CD4-positive, alpha-beta memory T cell (primary cell): ENCODE measurements at regions of chr3 and their contacts with region 1.

Region 1: GRCh38 chr3:149009732-149010131 is 18.4 kb downstream of the GYG1 start:
- DNase-seq: peak; percentile 57 to 82 (median 66)
- H3K4me3 ChIP-seq: no peak overlapping the region
- H3K4me3 Mint-ChIP-seq: peak overlapping the region in 7 of 8 donors; percentile 4 to 61 (median 40)
- H3K27ac ChIP-seq: no peak overlapping the region
- H3K27ac Mint-ChIP-seq: peak overlapping the region in 6 of 7 donors; percentile 9 to 87 (median 72)
- H3K4me1 ChIP-seq: peaks cover 22% of the 10 kb centered on the region
- H3K4me1 Mint-ChIP-seq: peaks cover 9 to 45% (median 27%) of the 10 kb centered on the region in 4 donors
- H3K27me3 ChIP-seq: no peaks in the 10 kb centered on the region
- H3K27me3 Mint-ChIP-seq: no peaks in the 10 kb centered on the region

Region 2: DNA sequence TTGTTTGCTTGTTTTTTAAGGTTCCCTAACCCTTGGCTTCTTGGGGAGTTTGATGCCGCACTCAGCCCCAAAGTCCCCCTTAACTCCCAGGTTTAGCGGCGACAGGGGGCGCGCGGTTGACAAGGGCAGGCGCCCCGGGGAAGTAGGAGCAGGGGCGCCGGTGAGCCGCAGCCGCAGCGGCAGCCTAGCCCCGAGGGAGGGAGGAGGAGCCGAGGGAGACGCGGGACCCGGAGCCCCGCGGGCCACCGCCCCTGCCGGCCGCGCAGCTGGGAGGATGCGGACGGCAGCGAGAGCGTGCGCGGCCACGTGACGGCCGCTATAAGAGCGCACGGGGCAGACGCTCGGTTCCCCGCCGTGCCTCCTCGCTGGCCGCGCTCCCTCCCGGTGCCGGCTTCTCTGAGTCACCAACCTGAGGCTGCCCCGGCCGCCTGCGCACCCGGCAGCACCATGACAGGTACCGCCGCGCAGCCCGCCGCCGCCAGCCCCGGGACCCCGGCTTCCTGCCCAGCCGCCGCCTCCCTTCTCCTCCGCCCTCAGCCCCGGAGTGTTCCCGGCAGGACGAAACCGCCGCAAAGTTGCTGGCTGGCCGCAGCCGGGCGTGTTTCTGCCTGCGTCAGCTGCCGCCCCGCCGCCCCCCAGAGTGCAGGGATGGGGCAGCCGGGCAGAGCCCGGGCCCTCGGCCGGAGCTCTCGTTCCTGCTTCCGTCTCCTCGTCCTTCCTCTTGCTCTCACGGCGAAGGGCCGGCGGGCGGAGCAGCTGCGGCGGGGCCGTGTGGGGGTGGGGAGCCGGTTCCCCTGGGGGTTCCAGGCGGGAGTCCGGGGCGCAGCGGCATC is 18.3 kb before region 1 on chr3 and contains the start of gene GYG1:
- CTCF ChIA-PET with region 1: no interaction called
- POLR2A ChIA-PET with region 1: interaction called, 16 read pairs
- intact Hi-C with region 1: no loop called
- DNase-seq: peak; percentile 76 to 87 (median 83)
- H3K4me3 ChIP-seq: peak within 1 kb of the TSS; percentile 49 to 56
- H3K4me3 Mint-ChIP-seq: peak within 1 kb of the TSS; percentile 84 to 92 (median 88)
- H3K27ac ChIP-seq: peak within 1 kb of the TSS; percentile 66
- H3K27ac Mint-ChIP-seq: peak within 1 kb of the TSS; percentile 79 to 93 (median 91)
- H3K4me1 ChIP-seq: peaks cover 27% of the 10 kb centered on the region
- H3K4me1 Mint-ChIP-seq: peaks cover 21 to 42% (median 27%) of the 10 kb centered on the region in 4 donors
- H3K27me3 ChIP-seq: no peaks in the 10 kb centered on the region
- H3K27me3 Mint-ChIP-seq: no peaks in the 10 kb centered on the region
- total RNA-seq, gene GYG1: 20.9 to 24.1 TPM